Pancreas (tissue), 10 donors: ENCODE measurements at regions of chr11 and their contacts with region 1.

Region 1: GRCh38 chr11:75142714-75143419 is 8.0 kb upstream of the SLCO2B1 start:
- DNase-seq: peak in 1 of 6 donors; percentile 52
- ATAC-seq: peak in 3 of 4 donors; percentile 39 to 74 (median 71)
- H3K4me3 ChIP-seq: no peak overlapping the region
- H3K27ac ChIP-seq: no peak overlapping the region
- H3K4me1 ChIP-seq: no peaks in the 10 kb centered on the region
- H3K27me3 ChIP-seq: no peaks in the 10 kb centered on the region
- CTCF ChIP-seq: no peak

Region 2: DNA sequence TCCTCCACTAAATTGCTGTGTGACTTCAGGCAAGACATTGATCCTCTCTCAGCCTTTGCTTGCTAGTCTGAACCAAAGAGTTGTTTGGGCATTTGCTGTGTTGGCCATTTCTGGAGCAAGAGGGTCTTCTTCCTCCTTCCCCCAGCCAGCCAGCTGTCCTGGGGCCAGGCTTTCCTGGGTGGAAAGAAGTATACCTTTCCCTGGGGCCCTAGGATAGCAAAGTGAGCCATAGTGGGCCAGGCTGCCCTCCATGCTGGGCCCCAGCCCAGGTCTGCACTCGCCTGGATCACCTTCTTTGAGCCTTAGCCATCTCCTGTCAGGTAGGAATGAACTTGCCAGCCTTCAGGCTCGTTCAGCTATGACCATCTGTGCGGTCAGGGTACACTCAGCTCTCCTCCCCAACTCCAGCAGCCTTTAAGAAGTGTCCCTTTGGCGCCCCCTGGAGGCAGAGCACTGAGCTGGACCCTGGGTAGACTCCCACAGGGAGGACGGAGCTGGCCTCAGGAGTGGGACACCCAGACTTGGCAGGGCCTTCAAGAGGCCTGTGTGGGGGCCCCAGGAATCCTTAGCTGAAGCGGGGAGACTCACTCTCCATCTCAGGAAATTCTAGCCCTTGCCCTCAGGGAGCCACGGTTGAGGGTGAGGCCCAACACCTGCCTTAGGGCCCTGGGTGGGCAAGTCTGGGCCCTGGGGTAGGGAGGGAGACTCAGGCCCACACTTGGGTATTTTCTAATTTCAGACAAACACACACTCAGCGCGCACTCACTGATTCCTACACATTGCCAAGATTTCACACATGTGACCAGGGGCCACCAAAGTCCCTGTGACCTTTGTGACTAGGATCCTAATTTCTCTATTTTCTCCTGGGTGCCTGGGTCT is 62.1 kb after region 1 on chr11:
- intact Hi-C with region 1: loop called in 2 of 3 experiments (anchors 5 to 10 kb)
- DNase-seq: peak; percentile 79 to 98 (median 92)
- ATAC-seq: peak; percentile 95 to 97 (median 96)
- H3K4me3 ChIP-seq: no peak overlapping the region
- H3K27ac ChIP-seq: no peak overlapping the region
- H3K4me1 ChIP-seq: peaks cover 0 to 3% (median 0%) of the 10 kb centered on the region in 3 donors
- H3K27me3 ChIP-seq: no peaks in the 10 kb centered on the region
- CTCF ChIP-seq: peak; percentile 77 to 93 (median 86)

Region 3: DNA sequence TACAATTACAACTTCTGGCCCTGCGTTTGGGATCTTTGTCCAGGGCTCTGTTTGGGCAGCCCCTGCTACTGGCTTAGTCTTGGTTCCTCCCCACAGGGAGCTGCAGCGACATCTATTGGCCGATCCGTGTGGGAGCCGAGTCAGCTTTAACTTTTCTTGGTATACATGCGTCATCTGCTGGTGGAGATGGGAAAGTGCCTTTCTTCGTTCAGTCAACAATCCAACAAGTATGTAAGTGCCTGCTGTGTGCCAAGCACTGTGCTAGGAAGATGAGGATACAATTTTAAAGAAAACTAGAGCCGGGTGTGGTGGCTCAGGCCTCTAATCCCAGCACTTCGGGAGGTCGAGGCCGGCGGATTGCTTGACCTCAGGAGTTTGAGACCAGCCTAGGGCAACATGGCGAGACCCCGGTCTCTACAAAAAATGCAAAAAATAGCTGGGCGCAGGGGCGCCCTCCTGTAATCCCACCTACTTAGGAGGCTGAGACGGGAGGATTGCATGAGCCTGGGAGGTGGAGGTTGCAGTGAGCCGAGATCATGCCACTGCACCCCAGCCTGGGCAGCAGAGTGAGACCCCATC is 105.9 kb after region 1 on chr11:
- intact Hi-C with region 1: loop called in 2 of 3 experiments (anchors 2 to 5 kb)
- DNase-seq: peak; percentile 79 to 92 (median 90)
- ATAC-seq: peak; percentile 86 to 98 (median 96)
- H3K4me3 ChIP-seq: no peak overlapping the region
- H3K27ac ChIP-seq: no peak overlapping the region
- H3K4me1 ChIP-seq: peaks cover 0 to 3% (median 3%) of the 10 kb centered on the region in 3 donors
- H3K27me3 ChIP-seq: no peaks in the 10 kb centered on the region
- CTCF ChIP-seq: peak; percentile 91 to 99 (median 98)